Naive thymus-derived CD4-positive, alpha-beta T cell (primary cell): ENCODE measurements at regions of chr9 and their contacts with region 1.

Region 1: GRCh38 chr9:73132034-73132776 is 19.5 kb upstream of the ANXA1 start:
- DNase-seq: peak; percentile 51 to 91 (median 85)
- ATAC-seq: peak; percentile 97
- H3K4me3 ChIP-seq: peak overlapping the region; percentile 78
- H3K4me3 Mint-ChIP-seq: peak overlapping the region; percentile 74 to 97 (median 90)
- H3K27ac ChIP-seq: peak overlapping the region; percentile 90
- H3K27ac Mint-ChIP-seq: peak overlapping the region; percentile 93 to 99 (median 95)
- H3K4me1 ChIP-seq: peaks cover 9% of the 10 kb centered on the region in 2 donors
- H3K4me1 Mint-ChIP-seq: peaks cover 20 to 47% (median 37%) of the 10 kb centered on the region in 7 donors
- H3K27me3 ChIP-seq: no peaks in the 10 kb centered on the region
- H3K27me3 Mint-ChIP-seq: no peaks in the 10 kb centered on the region

Region 2: GRCh38 chr9:71911253-71912074 is 1220.7 kb before region 1 on chr9 and contains the start of gene C9orf85:
- CTCF ChIA-PET with region 1: no interaction called
- POLR2A ChIA-PET with region 1: no interaction called
- intact Hi-C with region 1: loop called (anchors 1 kb)
- DNase-seq: peak; percentile 84 to 98 (median 95)
- ATAC-seq: peak; percentile 96
- H3K4me3 ChIP-seq: peak within 1 kb of the TSS; percentile 83
- H3K4me3 Mint-ChIP-seq: peak within 1 kb of the TSS; percentile 95 to 100 (median 100)
- H3K27ac ChIP-seq: peak within 1 kb of the TSS; percentile 74
- H3K27ac Mint-ChIP-seq: peak within 1 kb of the TSS; percentile 90 to 99 (median 95)
- H3K4me1 ChIP-seq: peaks cover 15 to 22% of the 10 kb centered on the region in 2 donors
- H3K4me1 Mint-ChIP-seq: peaks cover 47 to 80% (median 67%) of the 10 kb centered on the region in 7 donors
- H3K27me3 ChIP-seq: peaks cover 0 to 3% of the 10 kb centered on the region in 2 donors
- H3K27me3 Mint-ChIP-seq: no peaks in the 10 kb centered on the region
- total RNA-seq, gene C9orf85: 4.8 to 10.3 (median 8.6) TPM

Region 3: GRCh38 chr9:73116031-73116430 is 16.2 kb before region 1 on chr9:
- CTCF ChIA-PET with region 1: interaction called, 3 read pairs
- POLR2A ChIA-PET with region 1: no interaction called
- intact Hi-C with region 1: loop called in 1 of 2 experiments (anchors 1 kb)
- DNase-seq: no peak
- ATAC-seq: no peak
- H3K4me3 ChIP-seq: no peak overlapping the region
- H3K4me3 Mint-ChIP-seq: no peak overlapping the region
- H3K27ac ChIP-seq: no peak overlapping the region
- H3K27ac Mint-ChIP-seq: no peak overlapping the region
- H3K4me1 ChIP-seq: peaks cover 0 to 19% of the 10 kb centered on the region in 2 donors
- H3K4me1 Mint-ChIP-seq: peaks cover 19 to 48% (median 38%) of the 10 kb centered on the region in 7 donors
- H3K27me3 ChIP-seq: no peaks in the 10 kb centered on the region
- H3K27me3 Mint-ChIP-seq: no peaks in the 10 kb centered on the region

Region 4: GRCh38 chr9:73154760-73155159 is 22.6 kb after region 1 on chr9:
- CTCF ChIA-PET with region 1: interaction called, 6 read pairs
- POLR2A ChIA-PET with region 1: interaction called, 12 read pairs
- intact Hi-C with region 1: loop called (anchors 1 kb)
- DNase-seq: peak in 7 of 9 donors; percentile 36 to 68 (median 54)
- ATAC-seq: peak; percentile 52
- H3K4me3 ChIP-seq: peak overlapping the region; percentile 67
- H3K4me3 Mint-ChIP-seq: peak overlapping the region; percentile 81 to 98 (median 90)
- H3K27ac ChIP-seq: peak overlapping the region; percentile 77
- H3K27ac Mint-ChIP-seq: peak overlapping the region; percentile 86 to 97 (median 96)
- H3K4me1 ChIP-seq: peaks cover 37 to 54% of the 10 kb centered on the region in 2 donors
- H3K4me1 Mint-ChIP-seq: peaks cover 47 to 96% (median 79%) of the 10 kb centered on the region in 7 donors
- H3K27me3 ChIP-seq: no peaks in the 10 kb centered on the region
- H3K27me3 Mint-ChIP-seq: peaks cover 0 to 2% (median 0%) of the 10 kb centered on the region in 5 donors

Region 5: GRCh38 chr9:73782166-73782565 is 650.0 kb after region 1 on chr9:
- CTCF ChIA-PET with region 1: no interaction called
- POLR2A ChIA-PET with region 1: no interaction called
- intact Hi-C with region 1: no loop called
- DNase-seq: no peak
- ATAC-seq: no peak
- H3K4me3 ChIP-seq: no peak overlapping the region
- H3K4me3 Mint-ChIP-seq: no peak overlapping the region
- H3K27ac ChIP-seq: no peak overlapping the region
- H3K27ac Mint-ChIP-seq: no peak overlapping the region
- H3K4me1 ChIP-seq: no peaks in the 10 kb centered on the region
- H3K4me1 Mint-ChIP-seq: no peaks in the 10 kb centered on the region
- H3K27me3 ChIP-seq: no peaks in the 10 kb centered on the region
- H3K27me3 Mint-ChIP-seq: no peaks in the 10 kb centered on the region

Region 6: GRCh38 chr9:74496819-74497747 is 1364.9 kb after region 1 on chr9 and contains the start of gene RORB:
- CTCF ChIA-PET with region 1: no interaction called
- POLR2A ChIA-PET with region 1: no interaction called
- intact Hi-C with region 1: loop called in 1 of 2 experiments (anchors 2 kb)
- DNase-seq: peak in 2 of 9 donors; percentile 34 to 50
- ATAC-seq: peak; percentile 52
- H3K4me3 ChIP-seq: peak within 1 kb of the TSS; percentile 53
- H3K4me3 Mint-ChIP-seq: peak within 1 kb of the TSS; percentile 80 to 95 (median 88)
- H3K27ac ChIP-seq: no peak within 1 kb of the TSS
- H3K27ac Mint-ChIP-seq: peak within 1 kb of the TSS in 4 of 9 donors; percentile 30 to 75 (median 52)
- H3K4me1 ChIP-seq: no peaks in the 10 kb centered on the region
- H3K4me1 Mint-ChIP-seq: peaks cover 11 to 39% (median 33%) of the 10 kb centered on the region in 7 donors
- H3K27me3 ChIP-seq: peaks cover 0 to 8% of the 10 kb centered on the region in 2 donors
- H3K27me3 Mint-ChIP-seq: peaks cover 65 to 81% (median 66%) of the 10 kb centered on the region in 5 donors
- total RNA-seq, gene RORB: 0.12 TPM in 1 of 5 experiments, not detected in the others